Natural killer cell (primary cell): ENCODE measurements at regions of chr6 and their contacts with region 1.

Region 1: GRCh38 chr6:129748212-129748900 is 38.4 kb upstream of the ARHGAP18 start:
- DNase-seq: peak; percentile 24 to 81
- ATAC-seq: peak; percentile 88 to 91 (median 89)
- H3K4me3 ChIP-seq: peak overlapping the region; percentile 11
- H3K4me3 Mint-ChIP-seq: peak overlapping the region; percentile 86
- H3K27ac ChIP-seq: peak overlapping the region; percentile 85
- H3K27ac Mint-ChIP-seq: peak overlapping the region; percentile 93 to 95
- H3K4me1 ChIP-seq: peaks cover 27% of the 10 kb centered on the region
- H3K4me1 Mint-ChIP-seq: peaks cover 35 to 40% of the 10 kb centered on the region in 2 donors
- H3K27me3 ChIP-seq: no peaks in the 10 kb centered on the region
- H3K27me3 Mint-ChIP-seq: no peaks in the 10 kb centered on the region
- CTCF ChIP-seq: no peak

Region 2: GRCh38 chr6:129490521-129491245 is 257.7 kb before region 1 on chr6:
- intact Hi-C with region 1: loop called (anchors 2 kb)
- DNase-seq: peak; percentile 46 to 91
- ATAC-seq: peak; percentile 89 to 95 (median 94)
- H3K4me3 ChIP-seq: peak overlapping the region; percentile 46
- H3K4me3 Mint-ChIP-seq: peak overlapping the region; percentile 90
- H3K27ac ChIP-seq: peak overlapping the region; percentile 98
- H3K27ac Mint-ChIP-seq: peak overlapping the region; percentile 99
- H3K4me1 ChIP-seq: peaks cover 10% of the 10 kb centered on the region
- H3K4me1 Mint-ChIP-seq: peaks cover 27% of the 10 kb centered on the region in 2 donors
- H3K27me3 ChIP-seq: no peaks in the 10 kb centered on the region
- H3K27me3 Mint-ChIP-seq: no peaks in the 10 kb centered on the region
- CTCF ChIP-seq: no peak

Region 3: DNA sequence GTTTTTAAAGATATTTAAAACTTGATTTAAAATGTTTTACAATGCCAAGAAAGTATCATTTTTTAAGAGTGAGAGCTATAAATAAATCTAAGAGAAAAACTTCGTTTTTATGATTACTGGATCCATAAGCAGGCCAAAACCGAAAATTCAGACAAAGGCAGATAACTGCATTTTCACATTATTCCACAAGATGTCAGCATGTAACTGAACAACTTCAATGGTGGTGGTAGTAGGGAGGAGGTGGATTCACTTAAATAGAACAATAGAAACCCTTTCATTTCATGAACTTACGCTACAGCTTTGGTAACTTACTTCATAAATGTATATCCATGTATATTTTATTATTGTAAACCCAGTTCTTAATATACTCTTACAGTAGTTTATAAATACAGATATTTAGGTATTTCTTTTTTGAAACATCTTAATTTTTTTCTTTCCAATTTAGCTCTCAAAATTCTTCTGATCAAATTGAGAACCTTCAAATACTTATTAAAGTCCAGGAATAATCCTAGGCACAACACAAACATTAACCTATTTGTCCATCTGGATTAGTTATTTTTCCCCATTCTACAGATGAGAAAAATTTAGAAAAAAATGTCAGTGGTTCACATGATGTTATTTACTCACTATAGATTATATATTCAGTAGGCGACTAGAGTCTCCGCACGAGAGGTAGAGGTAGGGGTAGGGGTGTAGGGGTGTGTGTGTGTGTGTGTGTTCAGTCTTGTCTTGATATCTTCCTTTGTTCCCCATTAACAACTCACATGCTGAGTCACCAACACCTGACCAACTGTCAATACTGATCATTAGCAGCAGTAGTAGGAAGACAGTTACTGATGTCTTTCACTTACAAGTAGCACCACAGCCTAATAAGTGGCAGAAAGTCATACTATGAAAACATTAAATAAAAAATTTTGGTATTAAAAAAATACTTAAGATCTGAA is 149.8 kb before region 1 on chr6:
- intact Hi-C with region 1: loop called (anchors 1 kb)
- DNase-seq: peak in 1 of 2 donors; percentile 84
- ATAC-seq: peak; percentile 87 to 98 (median 94)
- H3K4me3 ChIP-seq: no peak overlapping the region
- H3K4me3 Mint-ChIP-seq: no peak overlapping the region
- H3K27ac ChIP-seq: no peak overlapping the region
- H3K27ac Mint-ChIP-seq: no peak overlapping the region
- H3K4me1 ChIP-seq: no peaks in the 10 kb centered on the region
- H3K4me1 Mint-ChIP-seq: no peaks in the 10 kb centered on the region
- H3K27me3 ChIP-seq: no peaks in the 10 kb centered on the region
- H3K27me3 Mint-ChIP-seq: no peaks in the 10 kb centered on the region
- CTCF ChIP-seq: peak; percentile 87

Region 4: DNA sequence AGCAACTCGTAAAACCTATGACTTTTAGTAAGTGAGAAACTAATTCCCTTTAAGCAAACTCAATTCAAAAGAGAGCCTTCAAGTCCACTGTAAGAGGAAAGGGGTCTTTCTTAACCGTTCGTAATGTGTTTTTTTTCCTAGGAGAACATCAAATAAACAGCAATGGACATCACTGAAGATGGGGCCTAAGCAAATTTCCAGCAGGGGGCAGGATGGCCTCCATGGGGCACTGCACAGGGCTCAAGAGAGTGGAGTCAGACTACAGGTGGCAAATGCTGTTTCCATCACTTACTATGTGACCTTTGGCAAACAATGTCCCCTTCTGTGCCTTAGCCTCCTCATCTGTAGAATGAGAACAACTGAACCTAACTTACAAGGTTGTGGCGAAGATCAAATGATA is 127.1 kb before region 1 on chr6:
- intact Hi-C with region 1: loop called (anchors 2 kb)
- DNase-seq: peak in 1 of 2 donors; percentile 62
- ATAC-seq: peak; percentile 48 to 70 (median 64)
- H3K4me3 ChIP-seq: no peak overlapping the region
- H3K4me3 Mint-ChIP-seq: no peak overlapping the region
- H3K27ac ChIP-seq: no peak overlapping the region
- H3K27ac Mint-ChIP-seq: no peak overlapping the region
- H3K4me1 ChIP-seq: no peaks in the 10 kb centered on the region
- H3K4me1 Mint-ChIP-seq: peaks cover 0 to 4% of the 10 kb centered on the region in 2 donors
- H3K27me3 ChIP-seq: no peaks in the 10 kb centered on the region
- H3K27me3 Mint-ChIP-seq: no peaks in the 10 kb centered on the region
- CTCF ChIP-seq: peak; percentile 33

Region 5: DNA sequence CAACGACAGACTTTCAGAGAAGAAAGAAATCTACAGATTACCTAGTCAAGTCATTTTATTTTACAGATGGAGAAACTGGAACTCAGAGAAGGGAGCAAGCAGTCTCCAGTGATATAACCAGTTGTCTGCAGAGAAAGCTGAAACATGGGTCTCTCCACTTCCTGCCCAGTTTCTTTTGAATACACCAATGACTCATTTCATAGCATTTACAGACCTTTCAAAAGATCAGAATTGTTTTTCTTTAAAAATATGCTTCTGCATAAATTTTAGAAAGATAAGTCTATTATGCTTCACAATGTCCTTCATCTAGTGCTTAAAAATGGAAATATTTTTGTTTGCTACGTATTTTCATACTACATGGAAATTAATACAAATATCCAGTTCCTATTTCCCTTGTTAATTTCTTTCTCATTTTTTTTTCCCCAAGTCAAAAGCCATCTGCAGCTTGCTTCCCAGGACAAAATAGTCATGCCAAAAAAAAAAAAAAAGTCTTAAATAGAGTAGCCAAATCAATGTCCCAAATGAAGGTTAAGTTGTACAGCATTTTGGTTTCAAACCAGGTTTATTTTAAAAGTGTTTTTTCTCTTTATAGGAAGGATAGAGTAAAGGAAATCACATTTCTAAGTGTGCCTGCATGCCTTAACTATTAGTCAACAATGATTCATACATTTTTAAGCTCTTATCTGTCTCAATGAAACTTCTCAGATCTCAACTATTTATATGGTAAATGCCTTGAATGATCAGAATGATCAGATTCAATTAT is 75.3 kb before region 1 on chr6:
- intact Hi-C with region 1: loop called (anchors 2 kb)
- DNase-seq: peak in 1 of 2 donors; percentile 57
- ATAC-seq: peak; percentile 42 to 61 (median 44)
- H3K4me3 ChIP-seq: no peak overlapping the region
- H3K4me3 Mint-ChIP-seq: peak overlapping the region; percentile 69
- H3K27ac ChIP-seq: peak overlapping the region; percentile 62
- H3K27ac Mint-ChIP-seq: peak overlapping the region; percentile 83 to 88
- H3K4me1 ChIP-seq: peaks cover 6% of the 10 kb centered on the region
- H3K4me1 Mint-ChIP-seq: peaks cover 27 to 30% of the 10 kb centered on the region in 2 donors
- H3K27me3 ChIP-seq: no peaks in the 10 kb centered on the region
- H3K27me3 Mint-ChIP-seq: no peaks in the 10 kb centered on the region
- CTCF ChIP-seq: no peak

Region 6: GRCh38 chr6:129683601-129684322 is 64.6 kb before region 1 on chr6:
- intact Hi-C with region 1: loop called (anchors 1 kb)
- DNase-seq: peak; percentile 44 to 83
- ATAC-seq: peak; percentile 83 to 94 (median 84)
- H3K4me3 ChIP-seq: no peak overlapping the region
- H3K4me3 Mint-ChIP-seq: peak overlapping the region; percentile 77
- H3K27ac ChIP-seq: peak overlapping the region; percentile 69
- H3K27ac Mint-ChIP-seq: peak overlapping the region; percentile 82 to 84
- H3K4me1 ChIP-seq: peaks cover 46% of the 10 kb centered on the region
- H3K4me1 Mint-ChIP-seq: peaks cover 55 to 66% of the 10 kb centered on the region in 2 donors
- H3K27me3 ChIP-seq: no peaks in the 10 kb centered on the region
- H3K27me3 Mint-ChIP-seq: no peaks in the 10 kb centered on the region
- CTCF ChIP-seq: no peak

Region 7: DNA sequence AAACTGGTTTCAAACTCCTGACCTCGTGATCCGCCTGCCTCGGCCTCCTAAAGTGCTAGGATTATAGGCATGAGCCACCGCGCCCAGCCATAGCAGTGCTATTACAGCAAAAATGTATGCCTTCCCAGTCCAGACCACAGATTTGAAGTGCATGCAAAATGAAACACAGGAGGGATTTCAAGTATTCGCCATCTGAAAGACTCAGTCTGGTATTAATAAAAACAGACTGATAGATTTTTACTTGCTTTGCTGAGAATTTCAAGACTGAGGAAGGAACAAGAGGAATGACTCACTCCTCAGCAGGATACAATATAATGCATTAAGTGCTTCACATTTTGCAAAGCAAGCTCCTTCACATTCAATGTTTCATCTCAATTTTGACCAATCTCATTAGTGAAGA is 752.3 kb after region 1 on chr6:
- intact Hi-C with region 1: no loop called
- DNase-seq: no peak
- ATAC-seq: no peak
- H3K4me3 ChIP-seq: no peak overlapping the region
- H3K4me3 Mint-ChIP-seq: no peak overlapping the region
- H3K27ac ChIP-seq: no peak overlapping the region
- H3K27ac Mint-ChIP-seq: no peak overlapping the region
- H3K4me1 ChIP-seq: no peaks in the 10 kb centered on the region
- H3K4me1 Mint-ChIP-seq: no peaks in the 10 kb centered on the region
- H3K27me3 ChIP-seq: no peaks in the 10 kb centered on the region
- H3K27me3 Mint-ChIP-seq: peaks cover 0 to 3% of the 10 kb centered on the region in 2 donors
- CTCF ChIP-seq: no peak